Activated T-helper 1 cell treated with anti-CD3 and anti-CD28 coated beads, Interleukin-12 subunit alpha, Interleukin-12 subunit beta, Interleukin-2, Interleukin-4 antibody, amounts not matched to agents 30 ng/mL and 10 ng/mL and 1 ng/mL, durations not matched to agents 14 hours and 24 hours and 36 hours (primary cell): ENCODE measurements at regions of chr3 and their contacts with region 1.

Region 1: DNA sequence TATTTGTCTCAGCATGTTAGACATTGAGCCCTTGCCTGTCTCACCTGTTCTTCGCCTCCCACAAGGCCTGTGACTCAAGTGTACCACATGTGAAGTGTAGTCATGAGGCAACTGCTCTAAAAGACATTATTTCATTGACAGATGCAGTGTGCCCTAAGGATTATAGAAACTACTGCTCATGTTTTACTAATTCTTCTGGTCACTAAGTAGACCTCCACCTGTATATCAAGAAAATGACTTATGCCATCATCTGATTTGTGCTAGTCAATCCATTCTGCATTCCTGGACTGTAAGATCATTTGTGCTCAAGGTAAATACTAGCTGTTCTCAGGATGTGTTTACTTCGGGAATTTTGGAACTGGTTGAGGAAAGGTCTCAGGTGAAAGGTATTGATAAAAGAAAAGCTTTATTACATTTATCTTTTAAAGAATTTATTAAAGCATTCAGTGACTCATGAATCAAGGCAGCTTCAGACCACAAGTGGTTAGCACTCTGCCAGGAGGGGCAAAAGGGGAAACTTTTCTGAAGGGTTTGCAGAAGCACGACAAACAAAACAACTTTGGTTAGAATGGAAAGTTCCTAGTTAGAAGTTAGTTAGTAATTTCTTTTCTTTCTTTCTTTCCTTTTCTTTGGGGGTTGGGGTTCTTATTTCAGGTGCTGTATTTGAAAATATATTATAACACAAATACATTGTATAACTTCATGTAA is 465.3 kb upstream of the CBLB start:
- DNase-seq: peak; percentile 31
- H3K4me3 Mint-ChIP-seq: peak overlapping the region; percentile 63
- H3K27ac Mint-ChIP-seq: peak overlapping the region; percentile 92
- H3K4me1 Mint-ChIP-seq: peaks cover 89% of the 10 kb centered on the region
- H3K27me3 Mint-ChIP-seq: no peaks in the 10 kb centered on the region

Region 2: GRCh38 chr3:105676621-105677300 is 657.3 kb before region 1 on chr3:
- intact Hi-C with region 1: loop called (anchors 1 kb)
- DNase-seq: no peak
- H3K4me3 Mint-ChIP-seq: peak overlapping the region; percentile 1
- H3K27ac Mint-ChIP-seq: peak overlapping the region; percentile 85
- H3K4me1 Mint-ChIP-seq: peaks cover 36% of the 10 kb centered on the region
- H3K27me3 Mint-ChIP-seq: no peaks in the 10 kb centered on the region

Region 3: DNA sequence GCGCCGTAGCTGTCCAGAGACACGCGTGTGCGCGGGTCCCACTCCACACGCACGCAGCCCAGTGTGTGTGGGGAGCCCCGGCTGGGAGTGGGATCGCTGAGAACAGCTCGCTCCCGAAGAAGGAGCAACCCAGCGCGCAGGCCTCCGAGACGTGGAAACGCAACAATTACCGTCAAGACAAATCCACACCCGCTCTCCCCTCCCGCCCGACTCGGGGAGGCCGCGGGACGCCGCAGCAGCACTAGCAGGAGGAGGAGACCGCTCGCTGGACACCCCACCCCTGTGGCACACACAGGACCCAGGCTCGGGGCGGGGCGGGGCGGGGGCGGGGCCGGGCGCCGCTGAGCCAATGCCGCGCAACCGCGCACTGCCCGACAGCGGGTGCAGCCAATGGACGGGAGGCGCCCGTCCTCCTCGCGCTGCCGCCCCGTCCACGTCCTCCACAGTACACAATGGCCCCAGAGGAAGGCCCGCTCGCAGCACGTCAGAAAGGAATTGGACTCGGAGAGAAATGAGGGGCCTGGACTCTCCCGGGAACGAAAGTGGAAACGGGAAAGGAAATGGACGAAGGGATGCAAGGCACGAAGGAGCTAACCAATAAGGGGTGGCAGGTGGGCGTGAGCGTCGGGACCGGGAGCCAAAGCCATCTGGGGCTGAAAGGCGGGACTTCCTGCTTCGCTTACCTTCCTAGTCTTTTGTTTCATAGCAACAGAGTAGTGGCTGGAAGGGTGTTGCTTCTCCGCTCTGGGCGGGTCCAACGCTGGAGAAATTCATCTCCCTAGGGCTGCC is 465.1 kb before region 1 on chr3 and contains the start of gene CBLB:
- intact Hi-C with region 1: loop called (anchors 1 kb)
- DNase-seq: peak; percentile 80
- H3K4me3 Mint-ChIP-seq: peak within 1 kb of the TSS; percentile 100
- H3K27ac Mint-ChIP-seq: peak within 1 kb of the TSS; percentile 99
- H3K4me1 Mint-ChIP-seq: peaks cover 48% of the 10 kb centered on the region
- H3K27me3 Mint-ChIP-seq: no peaks in the 10 kb centered on the region
- total RNA-seq, gene CBLB: 213 and 235 TPM in 2 replicates

Region 4: GRCh38 chr3:105938101-105938500 is 396.0 kb before region 1 on chr3:
- intact Hi-C with region 1: no loop called
- DNase-seq: no peak
- H3K4me3 Mint-ChIP-seq: no peak overlapping the region
- H3K27ac Mint-ChIP-seq: no peak overlapping the region
- H3K4me1 Mint-ChIP-seq: peaks cover 5% of the 10 kb centered on the region
- H3K27me3 Mint-ChIP-seq: no peaks in the 10 kb centered on the region

Region 5: GRCh38 chr3:106119614-106120082 is 214.4 kb before region 1 on chr3:
- intact Hi-C with region 1: loop called (anchors 1 kb)
- DNase-seq: no peak
- H3K4me3 Mint-ChIP-seq: peak overlapping the region; percentile 20
- H3K27ac Mint-ChIP-seq: peak overlapping the region; percentile 90
- H3K4me1 Mint-ChIP-seq: peaks cover 37% of the 10 kb centered on the region
- H3K27me3 Mint-ChIP-seq: no peaks in the 10 kb centered on the region

Region 6: GRCh38 chr3:106215047-106215446 is 119.0 kb before region 1 on chr3:
- intact Hi-C with region 1: loop called (anchors 1 kb)
- DNase-seq: peak; percentile 5
- H3K4me3 Mint-ChIP-seq: peak overlapping the region; percentile 43
- H3K27ac Mint-ChIP-seq: peak overlapping the region; percentile 82
- H3K4me1 Mint-ChIP-seq: peaks cover 56% of the 10 kb centered on the region
- H3K27me3 Mint-ChIP-seq: no peaks in the 10 kb centered on the region

Region 7: DNA sequence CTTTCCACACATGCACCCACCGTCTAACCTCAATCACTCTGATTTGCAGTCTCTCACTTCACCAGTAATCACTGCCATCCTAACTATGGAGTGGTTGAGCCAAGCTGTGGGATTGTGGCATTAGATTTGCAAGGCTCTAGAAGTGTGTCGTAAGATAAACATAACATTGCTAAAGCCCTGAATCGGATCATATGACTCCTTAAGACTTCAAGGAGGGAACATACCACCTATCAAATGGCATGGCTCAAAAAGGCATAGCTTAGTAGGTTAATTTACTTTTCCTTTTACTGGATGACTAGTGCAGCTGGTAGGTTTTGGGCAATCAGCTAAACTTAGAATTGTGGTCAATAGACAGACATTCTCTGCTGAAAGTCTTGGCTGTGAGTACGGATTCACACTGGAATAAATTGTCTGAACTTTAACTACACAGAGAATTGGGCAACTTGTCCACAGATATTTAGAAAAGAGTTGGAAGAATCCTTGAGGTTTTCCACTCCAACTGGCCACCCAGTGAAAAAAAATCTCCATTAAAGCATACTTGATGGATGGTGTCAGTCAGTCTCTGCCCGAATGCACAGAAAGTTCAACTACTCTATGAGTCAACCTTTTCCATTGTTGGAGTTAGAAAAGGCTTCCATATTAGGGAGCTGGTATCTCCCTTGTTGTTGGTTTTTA is 11.4 kb after region 1 on chr3:
- intact Hi-C with region 1: no loop called
- DNase-seq: no peak
- H3K4me3 Mint-ChIP-seq: no peak overlapping the region
- H3K27ac Mint-ChIP-seq: no peak overlapping the region
- H3K4me1 Mint-ChIP-seq: peaks cover 19% of the 10 kb centered on the region
- H3K27me3 Mint-ChIP-seq: no peaks in the 10 kb centered on the region

Region 8: DNA sequence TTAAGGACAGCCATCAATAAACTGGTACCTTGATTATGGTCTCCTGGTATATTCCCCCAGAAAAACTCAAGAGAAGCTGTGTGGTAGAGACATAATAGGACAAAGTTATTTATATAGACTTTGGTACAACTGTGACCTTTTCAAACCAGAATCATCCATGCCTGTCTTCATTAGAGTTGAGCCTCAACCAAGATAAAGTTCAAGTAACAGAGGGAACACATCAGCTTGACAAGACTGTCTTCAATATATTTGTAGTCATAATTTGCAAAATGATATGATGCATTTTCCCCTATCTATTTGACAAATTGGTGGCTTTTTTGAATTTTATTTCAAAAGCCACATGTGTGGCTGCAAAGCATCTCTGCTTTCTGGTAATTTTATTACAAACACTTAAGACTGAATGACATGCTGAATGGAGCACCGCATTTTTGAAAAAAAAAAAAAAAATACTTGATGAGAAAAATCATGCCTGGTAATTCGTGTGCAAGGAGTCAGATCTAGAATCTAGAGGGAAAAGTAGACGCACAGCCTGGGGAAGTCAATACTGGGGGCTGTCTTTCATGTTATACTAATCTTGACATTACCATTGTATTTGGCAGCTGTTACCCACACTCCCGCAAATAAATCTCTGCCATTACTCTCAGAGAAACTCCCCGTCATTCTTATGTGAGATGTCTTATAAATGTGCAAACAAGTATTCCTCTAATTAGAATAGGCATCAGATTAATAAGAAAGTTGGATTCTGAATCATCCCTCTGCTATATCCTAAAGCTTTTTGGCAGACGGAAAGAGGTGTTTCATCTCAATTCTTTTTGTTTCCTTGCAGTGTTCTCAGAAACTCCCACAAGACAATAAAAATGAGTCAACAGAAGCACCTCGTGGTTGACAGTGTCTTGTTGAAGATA is 89.5 kb after region 1 on chr3:
- intact Hi-C with region 1: loop called (anchors 1 kb)
- DNase-seq: no peak
- H3K4me3 Mint-ChIP-seq: peak overlapping the region; percentile 45
- H3K27ac Mint-ChIP-seq: peak overlapping the region; percentile 90
- H3K4me1 Mint-ChIP-seq: peaks cover 50% of the 10 kb centered on the region
- H3K27me3 Mint-ChIP-seq: no peaks in the 10 kb centered on the region

Region 9: DNA sequence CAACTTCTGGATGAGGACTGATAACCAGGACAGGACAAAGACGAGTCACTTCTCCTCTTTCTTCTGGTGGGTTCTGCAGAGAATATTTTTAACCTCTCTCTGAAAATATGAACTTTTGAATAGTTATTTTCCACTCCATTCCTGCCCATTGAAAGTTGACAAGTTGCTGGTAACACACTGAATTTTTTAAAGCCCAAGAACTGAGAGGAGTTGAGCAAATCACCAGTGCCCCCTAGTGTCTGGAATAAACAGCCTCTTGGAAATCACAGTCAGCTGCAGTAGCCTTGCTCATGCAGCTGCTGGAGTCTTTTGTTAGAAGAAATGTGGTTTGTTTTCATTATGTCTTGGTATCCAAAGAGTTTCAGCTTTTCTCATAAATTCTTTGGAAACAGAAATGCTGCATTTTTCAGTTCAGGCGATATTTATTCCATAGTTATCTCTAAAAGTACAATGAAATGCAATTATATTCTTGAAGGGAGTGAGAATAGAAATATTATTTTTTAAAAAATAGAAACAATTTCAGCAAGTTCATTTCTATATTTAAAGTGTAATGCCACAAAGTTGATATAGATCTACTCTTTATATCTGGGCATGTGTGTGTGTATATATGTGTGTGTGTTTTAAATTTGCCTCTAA is 275.7 kb after region 1 on chr3:
- intact Hi-C with region 1: loop called (anchors 1 kb)
- DNase-seq: peak; percentile 50
- H3K4me3 Mint-ChIP-seq: no peak overlapping the region
- H3K27ac Mint-ChIP-seq: peak overlapping the region; percentile 66
- H3K4me1 Mint-ChIP-seq: peaks cover 30% of the 10 kb centered on the region
- H3K27me3 Mint-ChIP-seq: no peaks in the 10 kb centered on the region